ENCODE measurements at regions of chr22 and their contacts with region 1.

Region 1: GRCh38 chr22:37792494-37792893 is 15.2 kb upstream of the GCAT start:
- DNase-seq: no peak
- H3K4me3 ChIP-seq: no peak overlapping the region
- H3K27ac ChIP-seq: no peak overlapping the region
- H3K27me3 ChIP-seq: no peaks in the 10 kb centered on the region
- CTCF ChIP-seq: no peak

Region 2: GRCh38 chr22:37601540-37602442 is 190.7 kb before region 1 on chr22:
- CTCF ChIA-PET with region 1: interaction called, 11 read pairs
- POLR2A ChIA-PET with region 1: no interaction called
- DNase-seq: no peak
- H3K4me3 ChIP-seq: no peak overlapping the region
- H3K27ac ChIP-seq: no peak overlapping the region
- H3K27me3 ChIP-seq: peaks cover 15% of the 10 kb centered on the region
- CTCF ChIP-seq: no peak

Region 3: GRCh38 chr22:37953437-37954179 is 161.1 kb after region 1 on chr22 and contains the starts of genes C22orf23 and POLR2F:
- CTCF ChIA-PET with region 1: no interaction called
- POLR2A ChIA-PET with region 1: no interaction called
- DNase-seq: peak; percentile 88
- H3K4me3 ChIP-seq: peak within 1 kb of the TSS; percentile 100
- H3K27ac ChIP-seq: peak within 1 kb of the TSS; percentile 52
- H3K27me3 ChIP-seq: no peaks in the 10 kb centered on the region
- CTCF ChIP-seq: no peak
- polyA plus RNA-seq, gene C22orf23: 0.45 and 0.55 TPM in 2 replicates
- polyA plus RNA-seq, gene POLR2F: 87.4 and 89.8 TPM in 2 replicates

Measured in AG04450 (cell line).